Aorta (tissue), 5 donors: ENCODE measurements at regions of chr3 and their contacts with region 1.

Region 1: DNA sequence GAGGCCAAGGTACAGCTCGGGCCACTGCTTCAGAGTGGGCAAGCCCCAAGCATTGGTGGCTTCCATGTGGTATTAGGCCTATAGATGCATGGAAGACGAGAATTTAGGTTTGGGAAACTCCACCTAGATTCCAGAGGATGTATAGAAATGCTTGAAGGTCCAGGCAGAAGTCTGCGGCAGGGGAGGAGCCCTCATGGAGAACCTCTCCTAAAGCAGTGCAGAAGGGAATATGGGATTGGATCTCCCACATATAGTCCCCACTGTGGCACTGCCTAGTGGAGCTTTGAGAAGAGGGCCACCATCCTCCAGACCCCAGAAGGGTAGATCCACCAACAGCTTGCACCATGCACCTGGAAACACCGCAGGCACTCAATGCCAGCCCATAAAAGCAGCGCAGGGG is 48.1 kb upstream of the XXYLT1 start:
- DNase-seq: no peak
- ATAC-seq: no peak
- H3K4me3 ChIP-seq: no peak overlapping the region
- H3K27ac ChIP-seq: no peak overlapping the region
- H3K4me1 ChIP-seq: no peaks in the 10 kb centered on the region
- H3K27me3 ChIP-seq: no peaks in the 10 kb centered on the region

Region 2: GRCh38 chr3:195182470-195182795 is 136.6 kb before region 1 on chr3:
- intact Hi-C with region 1: no loop called
- DNase-seq: no peak
- ATAC-seq: no peak
- H3K4me3 ChIP-seq: no peak overlapping the region
- H3K27ac ChIP-seq: no peak overlapping the region
- H3K4me1 ChIP-seq: no peaks in the 10 kb centered on the region
- H3K27me3 ChIP-seq: no peaks in the 10 kb centered on the region

Region 3: GRCh38 chr3:195302431-195302830 is 16.6 kb before region 1 on chr3:
- intact Hi-C with region 1: loop called in 1 of 2 experiments (anchors 2 kb)
- DNase-seq: no peak
- ATAC-seq: no peak
- H3K4me3 ChIP-seq: no peak overlapping the region
- H3K27ac ChIP-seq: no peak overlapping the region
- H3K4me1 ChIP-seq: no peaks in the 10 kb centered on the region
- H3K27me3 ChIP-seq: no peaks in the 10 kb centered on the region